Right ventricle myocardium inferior (tissue), 1 donor: ENCODE measurements at regions of chr11 and their contacts with region 1.

Region 1: GRCh38 chr11:75280227-75280701 is 39.7 kb downstream of the TPBGL start:
- DNase-seq: peak; percentile 85
- ATAC-seq: peak; percentile 76

Region 2: DNA sequence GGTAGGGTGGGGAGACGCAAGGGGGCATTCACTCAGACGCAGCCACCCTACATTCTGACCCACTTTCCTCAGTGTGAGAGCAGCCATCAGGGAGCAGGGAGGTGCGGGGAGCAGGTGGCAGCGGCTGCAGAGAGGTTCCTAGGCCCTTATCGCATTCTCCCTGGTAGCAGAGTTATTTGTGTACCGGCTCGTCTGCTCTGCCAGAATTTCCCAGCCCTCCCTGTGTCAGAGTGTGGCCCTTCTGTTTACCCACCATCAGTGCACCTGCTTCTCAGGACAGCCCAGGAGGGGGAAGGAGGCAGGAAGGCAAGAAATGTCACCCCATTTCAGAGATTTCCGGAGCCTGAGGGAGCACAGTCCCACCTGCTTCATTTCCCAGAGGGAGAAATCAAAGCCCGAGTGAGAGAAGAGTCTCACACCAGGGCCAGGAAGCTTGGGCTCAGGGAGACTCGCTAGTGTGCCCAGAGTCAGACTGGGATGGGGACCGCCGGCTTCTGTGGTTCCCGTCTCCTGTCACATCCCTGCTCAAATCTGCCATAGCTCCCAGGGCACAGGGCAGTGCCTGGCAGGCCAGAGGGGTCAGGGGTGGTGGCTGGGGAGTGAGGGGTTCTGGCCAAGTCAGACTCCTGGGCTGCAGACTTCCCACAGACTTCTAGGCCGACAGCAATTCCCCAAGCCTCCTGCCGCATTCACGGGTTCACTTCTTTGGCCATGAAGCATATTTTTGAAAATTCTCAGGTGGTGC is 21.5 kb after region 1 on chr11:
- intact Hi-C with region 1: no loop called
- DNase-seq: no peak
- ATAC-seq: peak; percentile 89

Region 3: DNA sequence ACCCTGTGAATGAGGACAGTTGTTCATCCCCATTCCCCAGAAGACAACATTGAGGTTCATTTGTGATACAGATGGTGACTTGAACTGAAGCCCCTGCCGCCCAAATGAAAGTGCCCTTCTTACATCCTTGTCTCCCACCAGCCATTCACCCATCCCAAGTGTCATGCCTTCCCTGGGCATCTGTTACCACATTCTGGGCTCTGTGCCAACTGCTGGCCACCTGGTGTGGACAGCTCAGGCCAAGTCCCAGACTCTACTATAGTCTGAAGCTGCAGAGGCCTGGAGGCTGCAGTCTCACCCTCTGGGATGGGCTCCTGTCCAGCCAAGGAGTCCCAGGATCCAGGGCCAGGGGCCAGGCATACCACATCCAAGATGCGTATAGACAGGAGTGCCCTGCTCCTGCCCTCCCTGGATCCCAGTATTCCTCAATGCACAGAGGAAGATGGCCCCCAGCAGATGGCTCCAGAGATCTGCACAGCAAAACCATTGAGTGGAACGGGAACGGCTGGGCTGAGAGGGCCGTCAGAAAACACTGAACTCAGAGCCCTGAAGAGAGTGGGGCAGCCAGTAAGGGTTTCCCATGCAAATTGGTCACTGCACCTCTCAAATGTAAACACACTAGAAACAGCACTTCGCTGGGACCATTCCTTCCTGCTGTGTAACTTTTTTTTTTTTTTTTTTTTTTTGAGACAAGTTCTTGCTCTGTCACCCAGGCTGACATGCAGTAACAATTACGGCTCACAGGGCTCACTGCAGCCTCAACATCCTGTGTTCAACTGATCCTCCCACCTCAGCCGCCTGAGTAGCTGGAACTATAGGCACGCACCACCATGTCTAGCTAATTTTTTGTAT is 48.4 kb after region 1 on chr11:
- intact Hi-C with region 1: loop called (anchors 1 kb)
- DNase-seq: peak; percentile 78
- ATAC-seq: peak; percentile 81

Region 4: DNA sequence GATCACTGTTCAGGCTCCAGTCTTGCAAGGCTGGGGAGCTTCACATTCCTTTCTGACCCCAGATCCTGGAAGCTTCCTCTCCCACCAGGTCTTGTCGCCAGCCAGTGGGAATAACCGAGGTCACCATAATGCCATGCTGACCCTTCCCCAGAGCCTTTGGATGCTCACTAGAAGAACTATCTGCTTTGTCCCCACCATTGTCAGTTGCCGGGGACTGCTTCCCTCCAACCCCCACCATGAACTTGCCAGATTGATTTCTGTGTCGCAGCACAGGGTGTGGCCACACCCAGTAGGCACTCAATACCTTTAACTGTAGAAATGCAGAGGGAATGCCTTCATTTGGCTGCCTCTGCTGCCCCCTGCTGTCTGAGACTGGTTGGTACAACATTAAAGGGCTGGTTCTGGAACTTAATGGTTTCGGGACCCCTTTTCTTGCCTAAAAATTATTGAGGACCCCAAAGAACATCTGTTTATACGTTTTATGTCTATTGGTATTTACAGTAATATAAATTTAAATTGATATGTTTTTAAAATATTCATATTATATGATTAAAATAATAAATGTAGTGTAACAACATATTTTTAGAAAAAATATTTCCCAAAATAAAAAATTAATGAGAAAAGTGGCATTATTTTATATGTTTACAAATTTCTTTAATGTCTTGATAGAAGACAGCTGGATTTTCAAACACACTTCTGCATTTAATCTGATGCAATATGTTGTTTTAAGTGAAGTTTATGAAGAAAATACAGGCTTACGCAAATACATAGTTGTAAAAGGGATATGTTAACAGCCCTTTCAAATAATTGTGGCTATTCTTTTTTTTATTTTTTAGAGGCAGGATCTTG is 252.2 kb after region 1 on chr11:
- intact Hi-C with region 1: loop called (anchors 5 kb)
- DNase-seq: peak; percentile 72
- ATAC-seq: peak; percentile 45